ENCODE measurements at regions of chr12 and their contacts with region 1.

Region 1: GRCh38 chr12:108495054-108495453 is 20.0 kb upstream of the FICD start:
- DNase-seq: peak; percentile 41 to 48
- ATAC-seq: peak; percentile 65 to 71 (median 67)
- H3K4me3 ChIP-seq: no peak overlapping the region
- H3K4me3 Mint-ChIP-seq: no peak overlapping the region
- H3K27ac ChIP-seq: no peak overlapping the region
- H3K27ac Mint-ChIP-seq: no peak overlapping the region
- H3K4me1 ChIP-seq: no peaks in the 10 kb centered on the region
- H3K4me1 Mint-ChIP-seq: no peaks in the 10 kb centered on the region
- H3K27me3 ChIP-seq: no peaks in the 10 kb centered on the region
- H3K27me3 Mint-ChIP-seq: peaks cover 23 to 47% of the 10 kb centered on the region in 2 donors
- CTCF ChIP-seq: peak; percentile 74

Region 2: GRCh38 chr12:107492393-107493134 is 1002.5 kb before region 1 on chr12:
- intact Hi-C with region 1: no loop called
- DNase-seq: no peak
- ATAC-seq: no peak
- H3K4me3 ChIP-seq: no peak overlapping the region
- H3K4me3 Mint-ChIP-seq: no peak overlapping the region
- H3K27ac ChIP-seq: no peak overlapping the region
- H3K27ac Mint-ChIP-seq: peak overlapping the region in 1 of 2 donors; percentile 85
- H3K4me1 ChIP-seq: peaks cover 10% of the 10 kb centered on the region
- H3K4me1 Mint-ChIP-seq: peaks cover 20 to 37% of the 10 kb centered on the region in 2 donors
- H3K27me3 ChIP-seq: no peaks in the 10 kb centered on the region
- H3K27me3 Mint-ChIP-seq: peaks cover 0 to 2% of the 10 kb centered on the region in 2 donors
- CTCF ChIP-seq: no peak

Region 3: DNA sequence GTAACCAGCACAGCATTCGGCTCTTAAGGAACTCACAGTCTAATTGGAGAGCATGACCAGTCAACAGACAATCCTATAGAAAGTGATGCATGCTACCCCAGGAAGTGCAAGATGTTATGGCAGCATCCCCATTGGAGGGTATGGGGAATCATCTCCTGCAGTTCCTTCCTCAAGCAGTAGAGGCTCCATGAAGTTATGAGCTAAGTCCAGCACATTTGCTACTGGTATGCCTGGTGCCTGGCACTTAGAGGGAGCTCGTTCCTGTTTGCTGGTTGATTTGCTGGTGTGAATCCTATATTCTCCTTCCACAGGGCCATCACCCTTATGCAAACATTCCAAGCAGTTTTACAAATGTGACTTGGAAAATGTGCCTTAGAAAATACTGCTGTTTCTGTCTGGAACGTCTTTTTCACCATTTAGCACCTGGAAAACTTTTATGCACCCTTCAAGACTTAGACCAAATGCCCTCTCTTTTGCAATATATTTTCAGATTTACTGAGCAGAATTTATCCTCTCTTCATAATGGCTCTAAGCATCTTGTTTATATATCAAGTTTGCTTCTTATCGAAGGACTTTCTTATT is 502.1 kb before region 1 on chr12:
- intact Hi-C with region 1: loop called (anchors 5 kb)
- DNase-seq: peak in 1 of 2 donors; percentile 12
- ATAC-seq: peak in 2 of 3 donors; percentile 32 to 65
- H3K4me3 ChIP-seq: no peak overlapping the region
- H3K4me3 Mint-ChIP-seq: no peak overlapping the region
- H3K27ac ChIP-seq: no peak overlapping the region
- H3K27ac Mint-ChIP-seq: no peak overlapping the region
- H3K4me1 ChIP-seq: no peaks in the 10 kb centered on the region
- H3K4me1 Mint-ChIP-seq: no peaks in the 10 kb centered on the region
- H3K27me3 ChIP-seq: peaks cover 3% of the 10 kb centered on the region
- H3K27me3 Mint-ChIP-seq: peaks cover 42 to 56% of the 10 kb centered on the region in 2 donors
- CTCF ChIP-seq: no peak

Region 4: DNA sequence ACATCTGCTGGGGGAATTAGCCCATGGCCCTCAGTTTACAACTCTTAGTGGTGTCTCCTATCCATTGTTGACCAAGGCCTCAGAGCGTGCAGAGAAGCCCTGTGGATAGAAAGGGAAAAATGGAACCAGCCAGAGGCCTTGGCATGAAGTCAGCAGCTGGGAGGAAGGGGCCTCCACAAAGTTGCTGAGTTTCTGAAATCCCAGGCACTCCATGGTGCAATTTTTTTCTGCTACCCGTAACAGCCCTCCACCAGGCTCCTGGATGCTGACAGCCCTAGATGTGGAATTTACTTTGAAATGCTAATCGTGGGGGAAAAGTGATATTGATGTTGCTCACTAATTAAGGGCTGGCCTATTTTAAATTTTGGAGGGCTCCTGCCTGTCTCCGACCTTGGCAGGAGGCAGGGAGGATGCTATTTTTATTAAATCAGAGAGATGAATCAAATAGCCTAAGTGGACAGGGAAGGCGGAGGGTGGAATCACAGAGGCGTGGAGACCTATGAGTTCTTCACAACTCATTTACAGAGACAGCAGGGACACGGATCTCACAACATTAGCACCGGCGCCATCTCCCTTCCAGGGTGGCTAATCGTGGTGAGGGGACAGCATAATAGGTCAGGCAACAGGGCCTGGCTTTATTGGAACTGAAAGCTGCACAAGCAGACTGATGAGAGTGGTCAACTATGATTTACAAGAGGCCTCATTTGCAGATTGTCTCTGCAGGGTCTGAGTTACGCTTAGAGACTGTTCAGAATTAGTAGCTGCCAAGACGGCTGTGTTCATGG is 465.8 kb before region 1 on chr12:
- intact Hi-C with region 1: no loop called
- DNase-seq: no peak
- ATAC-seq: no peak
- H3K4me3 ChIP-seq: no peak overlapping the region
- H3K4me3 Mint-ChIP-seq: no peak overlapping the region
- H3K27ac ChIP-seq: no peak overlapping the region
- H3K27ac Mint-ChIP-seq: no peak overlapping the region
- H3K4me1 ChIP-seq: no peaks in the 10 kb centered on the region
- H3K4me1 Mint-ChIP-seq: no peaks in the 10 kb centered on the region
- H3K27me3 ChIP-seq: peaks cover 3% of the 10 kb centered on the region
- H3K27me3 Mint-ChIP-seq: peaks cover 24 to 39% of the 10 kb centered on the region in 2 donors
- CTCF ChIP-seq: no peak

Region 5: DNA sequence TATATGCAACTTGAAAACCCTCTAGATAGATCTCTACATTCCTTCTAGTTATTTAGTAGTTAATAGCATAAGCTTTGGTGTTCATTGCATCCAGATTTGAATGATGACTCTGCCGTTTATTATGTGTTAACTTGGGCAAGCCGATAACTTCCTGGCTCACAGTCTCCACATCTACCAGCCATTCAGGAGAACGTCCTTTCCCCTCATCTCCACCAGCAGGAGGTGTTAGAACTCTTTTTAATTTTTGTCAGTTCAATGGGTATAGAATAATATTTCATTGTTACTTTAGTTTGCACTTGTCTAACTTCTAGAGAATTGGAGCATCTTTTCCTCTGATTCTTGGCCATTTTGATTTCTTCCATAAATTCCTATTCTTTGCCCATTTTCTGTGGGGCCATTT is 396.0 kb before region 1 on chr12:
- intact Hi-C with region 1: loop called (anchors 1 kb)
- DNase-seq: peak in 1 of 2 donors; percentile 17
- ATAC-seq: peak in 2 of 3 donors; percentile 44 to 49
- H3K4me3 ChIP-seq: no peak overlapping the region
- H3K4me3 Mint-ChIP-seq: no peak overlapping the region
- H3K27ac ChIP-seq: no peak overlapping the region
- H3K27ac Mint-ChIP-seq: no peak overlapping the region
- H3K4me1 ChIP-seq: no peaks in the 10 kb centered on the region
- H3K4me1 Mint-ChIP-seq: no peaks in the 10 kb centered on the region
- H3K27me3 ChIP-seq: no peaks in the 10 kb centered on the region
- H3K27me3 Mint-ChIP-seq: peaks cover 10 to 12% of the 10 kb centered on the region in 2 donors
- CTCF ChIP-seq: peak; percentile 39

Region 6: GRCh38 chr12:108234158-108234557 is 260.9 kb before region 1 on chr12:
- intact Hi-C with region 1: loop called (anchors 1 kb)
- DNase-seq: peak; percentile 20 to 22
- ATAC-seq: peak; percentile 66 to 94 (median 88)
- H3K4me3 ChIP-seq: no peak overlapping the region
- H3K4me3 Mint-ChIP-seq: no peak overlapping the region
- H3K27ac ChIP-seq: no peak overlapping the region
- H3K27ac Mint-ChIP-seq: no peak overlapping the region
- H3K4me1 ChIP-seq: peaks cover 1% of the 10 kb centered on the region
- H3K4me1 Mint-ChIP-seq: peaks cover 7 to 11% of the 10 kb centered on the region in 2 donors
- H3K27me3 ChIP-seq: no peaks in the 10 kb centered on the region
- H3K27me3 Mint-ChIP-seq: peaks cover 10% of the 10 kb centered on the region in 2 donors
- CTCF ChIP-seq: peak; percentile 56